CD8-positive, alpha-beta memory T cell (primary cell): ENCODE measurements at regions of chr16 and their contacts with region 1.

Region 1: GRCh38 chr16:27179500-27180072 is 23.7 kb upstream of the KDM8 start:
- DNase-seq: peak; percentile 77 to 89 (median 77)
- H3K4me3 ChIP-seq: no peak overlapping the region
- H3K4me3 Mint-ChIP-seq: peak overlapping the region in 1 of 7 donors; percentile 64
- H3K27ac ChIP-seq: no peak overlapping the region
- H3K27ac Mint-ChIP-seq: peak overlapping the region in 7 of 8 donors; percentile 13 to 77 (median 56)
- H3K4me1 ChIP-seq: peaks cover 23% of the 10 kb centered on the region
- H3K4me1 Mint-ChIP-seq: peaks cover 17 to 28% (median 25%) of the 10 kb centered on the region in 3 donors
- H3K27me3 ChIP-seq: no peaks in the 10 kb centered on the region
- H3K27me3 Mint-ChIP-seq: peaks cover 0 to 2% of the 10 kb centered on the region in 2 donors

Region 2: GRCh38 chr16:27033281-27033979 is 146.2 kb before region 1 on chr16:
- CTCF ChIA-PET with region 1: no interaction called
- POLR2A ChIA-PET with region 1: no interaction called
- DNase-seq: no peak
- H3K4me3 ChIP-seq: no peak overlapping the region
- H3K4me3 Mint-ChIP-seq: no peak overlapping the region
- H3K27ac ChIP-seq: no peak overlapping the region
- H3K27ac Mint-ChIP-seq: no peak overlapping the region
- H3K4me1 ChIP-seq: no peaks in the 10 kb centered on the region
- H3K4me1 Mint-ChIP-seq: no peaks in the 10 kb centered on the region
- H3K27me3 ChIP-seq: no peaks in the 10 kb centered on the region
- H3K27me3 Mint-ChIP-seq: peaks cover 16 to 51% of the 10 kb centered on the region in 2 donors

Region 3: DNA sequence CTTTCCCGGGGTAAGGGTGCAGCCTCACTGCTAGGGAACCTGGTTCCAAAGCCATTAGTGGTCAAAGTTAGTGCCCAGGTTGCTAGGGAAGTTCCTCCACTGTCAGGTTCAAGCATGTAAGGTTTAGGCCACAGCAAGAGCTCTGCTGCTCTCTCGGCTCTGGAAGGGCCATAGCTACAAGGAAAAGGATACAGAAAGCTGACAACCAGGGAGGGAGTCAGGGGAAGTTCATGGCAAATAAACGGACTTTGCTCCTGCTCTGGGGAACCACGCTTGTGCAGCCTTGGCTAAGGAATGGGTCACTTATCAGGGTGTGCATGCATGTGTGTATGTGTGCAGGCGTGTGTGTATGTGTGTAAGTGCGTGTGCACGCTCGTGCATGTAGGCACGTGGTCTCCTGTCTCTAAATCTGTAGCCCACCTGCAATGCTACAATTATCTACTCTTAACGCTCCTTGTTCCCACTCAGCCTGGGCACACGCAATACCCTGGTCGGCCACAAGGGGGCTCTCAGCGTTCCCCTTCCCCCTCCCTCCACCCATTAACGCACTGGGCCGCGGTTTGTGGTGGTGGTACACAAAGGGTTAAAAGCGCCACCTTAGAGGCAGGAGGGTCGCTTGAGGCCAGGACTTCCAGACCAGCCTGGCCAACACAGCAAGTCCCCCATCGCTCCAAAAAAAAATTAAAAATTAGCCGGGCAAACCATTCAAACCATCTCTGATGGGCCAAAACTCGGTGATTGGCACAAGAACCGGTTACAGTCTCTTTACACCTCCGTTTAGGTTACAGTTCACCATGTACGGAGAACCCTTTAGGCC is 24.7 kb before region 1 on chr16:
- CTCF ChIA-PET with region 1: interaction called, 85 read pairs
- POLR2A ChIA-PET with region 1: no interaction called
- DNase-seq: peak; percentile 36 to 71 (median 50)
- H3K4me3 ChIP-seq: no peak overlapping the region
- H3K4me3 Mint-ChIP-seq: no peak overlapping the region
- H3K27ac ChIP-seq: no peak overlapping the region
- H3K27ac Mint-ChIP-seq: peak overlapping the region in 3 of 8 donors; percentile 2 to 60 (median 27)
- H3K4me1 ChIP-seq: peaks cover 10% of the 10 kb centered on the region
- H3K4me1 Mint-ChIP-seq: peaks cover 4 to 7% (median 5%) of the 10 kb centered on the region in 3 donors
- H3K27me3 ChIP-seq: no peaks in the 10 kb centered on the region
- H3K27me3 Mint-ChIP-seq: no peaks in the 10 kb centered on the region

Region 4: GRCh38 chr16:27203429-27204231 is 24.0 kb after region 1 on chr16 and contains the start of gene KDM8:
- CTCF ChIA-PET with region 1: interaction called, 104 read pairs
- POLR2A ChIA-PET with region 1: interaction called, 9 read pairs
- DNase-seq: peak; percentile 99 to 100 (median 100)
- H3K4me3 ChIP-seq: peak within 1 kb of the TSS; percentile 87
- H3K4me3 Mint-ChIP-seq: peak within 1 kb of the TSS; percentile 90 to 99 (median 95)
- H3K27ac ChIP-seq: peak within 1 kb of the TSS; percentile 86
- H3K27ac Mint-ChIP-seq: peak within 1 kb of the TSS; percentile 93 to 100 (median 99)
- H3K4me1 ChIP-seq: peaks cover 51% of the 10 kb centered on the region
- H3K4me1 Mint-ChIP-seq: peaks cover 52 to 63% (median 63%) of the 10 kb centered on the region in 3 donors
- H3K27me3 ChIP-seq: no peaks in the 10 kb centered on the region
- H3K27me3 Mint-ChIP-seq: no peaks in the 10 kb centered on the region
- total RNA-seq, gene KDM8: 9.1 to 10.8 TPM

Region 5: GRCh38 chr16:27355610-27356009 is 176.0 kb after region 1 on chr16:
- CTCF ChIA-PET with region 1: interaction called, 13 read pairs
- POLR2A ChIA-PET with region 1: no interaction called
- DNase-seq: no peak
- H3K4me3 ChIP-seq: no peak overlapping the region
- H3K4me3 Mint-ChIP-seq: peak overlapping the region in 1 of 7 donors; percentile 12
- H3K27ac ChIP-seq: no peak overlapping the region
- H3K27ac Mint-ChIP-seq: peak overlapping the region in 4 of 8 donors; percentile 32 to 74 (median 50)
- H3K4me1 ChIP-seq: no peaks in the 10 kb centered on the region
- H3K4me1 Mint-ChIP-seq: peaks cover 0 to 9% (median 0%) of the 10 kb centered on the region in 3 donors
- H3K27me3 ChIP-seq: no peaks in the 10 kb centered on the region
- H3K27me3 Mint-ChIP-seq: no peaks in the 10 kb centered on the region

Region 6: DNA sequence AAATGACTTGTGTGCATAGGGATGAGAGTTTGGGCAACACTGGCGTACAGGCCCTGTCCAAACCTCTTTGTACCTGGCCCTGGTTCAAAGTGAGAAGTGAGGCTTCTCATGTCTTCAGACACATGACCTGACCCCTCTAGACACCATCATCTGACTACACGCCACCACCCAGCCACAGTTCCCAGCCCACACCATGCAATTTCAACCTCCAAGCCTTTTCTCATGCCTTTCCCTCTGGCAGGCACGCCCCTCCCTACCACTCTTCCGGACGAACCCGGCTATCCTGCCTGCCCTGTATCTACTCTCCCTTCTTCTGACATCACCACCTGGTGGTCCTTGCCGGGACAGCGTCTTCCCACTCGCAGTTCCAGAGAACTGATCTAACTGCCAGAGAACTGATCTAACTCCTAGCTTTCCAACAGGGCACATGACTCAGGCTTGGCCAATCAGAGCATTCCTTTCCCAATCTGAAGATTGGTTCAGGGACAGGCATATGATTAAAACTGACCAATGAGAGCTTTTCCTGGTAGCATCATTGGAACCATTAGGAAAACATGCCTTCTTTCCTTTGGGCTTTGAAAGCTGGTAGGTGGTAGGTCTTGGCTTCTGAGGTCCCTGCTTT is 195.3 kb after region 1 on chr16:
- CTCF ChIA-PET with region 1: interaction called, 15 read pairs
- POLR2A ChIA-PET with region 1: no interaction called
- DNase-seq: peak in 4 of 5 donors; percentile 15 to 62 (median 32)
- H3K4me3 ChIP-seq: no peak overlapping the region
- H3K4me3 Mint-ChIP-seq: no peak overlapping the region
- H3K27ac ChIP-seq: no peak overlapping the region
- H3K27ac Mint-ChIP-seq: no peak overlapping the region
- H3K4me1 ChIP-seq: peaks cover 59% of the 10 kb centered on the region
- H3K4me1 Mint-ChIP-seq: peaks cover 22 to 38% (median 28%) of the 10 kb centered on the region in 3 donors
- H3K27me3 ChIP-seq: no peaks in the 10 kb centered on the region
- H3K27me3 Mint-ChIP-seq: no peaks in the 10 kb centered on the region

Region 7: GRCh38 chr16:27461483-27462171 is 282.0 kb after region 1 on chr16:
- CTCF ChIA-PET with region 1: interaction called, 14 read pairs
- POLR2A ChIA-PET with region 1: no interaction called
- DNase-seq: no peak
- H3K4me3 ChIP-seq: no peak overlapping the region
- H3K4me3 Mint-ChIP-seq: peak overlapping the region in 6 of 7 donors; percentile 26 to 91 (median 45)
- H3K27ac ChIP-seq: no peak overlapping the region
- H3K27ac Mint-ChIP-seq: peak overlapping the region; percentile 53 to 99 (median 85)
- H3K4me1 ChIP-seq: peaks cover 74% of the 10 kb centered on the region
- H3K4me1 Mint-ChIP-seq: peaks cover 55 to 95% (median 61%) of the 10 kb centered on the region in 3 donors
- H3K27me3 ChIP-seq: no peaks in the 10 kb centered on the region
- H3K27me3 Mint-ChIP-seq: peaks cover 0 to 5% of the 10 kb centered on the region in 2 donors